Cardiac septum (tissue), 1 donor: ENCODE measurements at regions of chr2 and their contacts with region 1.

Region 1: DNA sequence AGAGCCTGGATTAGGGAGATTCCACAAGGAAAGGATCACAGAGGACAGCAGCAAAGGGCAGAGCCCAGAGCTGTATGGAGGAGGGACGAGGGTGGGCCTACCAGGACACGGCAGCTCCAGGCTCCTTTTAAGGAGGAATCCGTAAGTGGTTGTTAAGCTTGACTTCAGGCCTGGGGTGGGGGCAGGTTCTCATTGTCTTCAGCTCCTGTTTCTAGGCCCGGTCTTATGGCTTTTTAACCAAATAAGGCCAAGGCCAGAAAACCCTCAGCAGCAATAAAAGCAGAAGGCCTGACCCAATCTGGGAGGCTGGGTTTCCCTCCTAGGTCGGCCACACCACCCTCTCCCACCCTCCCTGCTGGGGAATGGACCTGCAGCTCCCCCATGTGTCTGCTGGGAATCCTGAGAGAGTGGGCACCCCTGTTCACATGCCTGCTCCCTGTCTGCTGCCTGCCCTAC is 111.2 kb downstream of the PLB1 start:
- DNase-seq: no peak

Region 2: GRCh38 chr2:28510184-28510583 is 96.8 kb before region 1 on chr2:
- intact Hi-C with region 1: no loop called
- DNase-seq: no peak

Region 3: GRCh38 chr2:28624793-28625701 is 18.0 kb after region 1 on chr2:
- intact Hi-C with region 1: loop called (anchors 2 kb)
- DNase-seq: no peak

Region 4: DNA sequence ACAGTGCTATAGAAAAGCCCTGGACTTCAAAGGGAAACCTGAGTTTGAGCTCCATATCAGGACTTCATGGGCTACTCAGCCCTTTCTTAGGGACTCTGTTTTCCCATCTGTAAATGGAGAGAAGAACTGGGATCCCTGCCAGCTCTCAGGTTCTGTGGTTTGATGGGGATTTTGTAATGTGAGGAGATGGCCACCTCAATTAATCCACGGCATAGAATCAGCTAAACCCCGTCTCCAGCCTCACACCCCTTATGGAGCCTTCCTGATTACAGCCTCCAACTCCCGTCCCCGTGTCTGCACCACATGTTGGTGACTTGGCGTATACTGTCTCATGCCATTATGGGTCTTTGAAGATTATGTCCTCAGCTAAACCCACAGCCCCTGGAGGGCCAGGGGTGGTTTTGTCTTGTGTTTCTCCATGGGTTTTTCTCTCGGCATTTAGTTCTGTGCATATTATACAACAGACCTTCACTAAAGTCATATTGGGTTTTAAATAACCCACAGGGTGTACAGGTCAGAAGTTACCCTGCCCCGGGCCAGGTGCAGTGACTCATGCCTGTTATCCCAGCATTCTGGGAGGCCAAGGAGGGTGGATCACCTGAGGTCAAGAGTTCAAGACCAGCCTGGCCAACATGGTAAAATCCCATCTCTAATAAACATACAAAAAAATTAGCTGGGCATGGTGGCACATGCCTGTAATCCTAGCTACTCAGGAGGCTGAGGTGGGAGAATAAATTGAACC is 80.8 kb after region 1 on chr2:
- intact Hi-C with region 1: no loop called
- DNase-seq: no peak

Region 5: DNA sequence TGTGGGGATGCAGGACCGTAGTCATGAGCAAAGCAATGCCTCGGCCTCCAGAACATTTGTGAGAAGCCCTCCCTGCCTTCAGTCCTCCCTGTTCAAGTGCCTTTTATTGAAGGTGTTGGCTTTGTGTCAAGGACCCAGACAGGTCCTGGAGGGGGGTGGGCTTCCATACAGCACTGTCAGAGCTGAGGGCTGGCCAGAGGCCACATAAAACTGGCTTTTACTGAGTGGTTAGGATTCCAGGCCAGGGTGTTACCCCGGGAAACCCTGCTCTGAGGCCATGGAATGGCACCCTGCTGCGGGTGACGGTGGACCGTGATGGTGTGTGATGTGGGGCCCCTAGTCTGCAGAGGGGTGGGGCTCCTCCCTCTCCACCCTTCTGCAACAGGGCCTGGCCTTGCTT is 415.7 kb after region 1 on chr2:
- intact Hi-C with region 1: no loop called
- DNase-seq: no peak

Region 6: GRCh38 chr2:29075894-29076705 is 469.1 kb after region 1 on chr2:
- intact Hi-C with region 1: no loop called
- DNase-seq: no peak